Activated T-helper 1 cell treated with anti-CD3 and anti-CD28 coated beads, Interleukin-12 subunit alpha, Interleukin-12 subunit beta, Interleukin-2, Interleukin-4 antibody, amounts not matched to agents 30 ng/mL and 10 ng/mL and 1 ng/mL, durations not matched to agents 14 hours and 24 hours and 36 hours (primary cell): ENCODE measurements at regions of chr12 and their contacts with region 1.

Region 1: GRCh38 chr12:57751788-57752667 is at the start of gene CDK4:
- DNase-seq: peak; percentile 98
- H3K4me3 Mint-ChIP-seq: peak within 1 kb of the TSS; percentile 94
- H3K27ac Mint-ChIP-seq: peak within 1 kb of the TSS; percentile 95
- H3K4me1 Mint-ChIP-seq: peaks cover 67% of the 10 kb centered on the region
- H3K27me3 Mint-ChIP-seq: peaks cover 3% of the 10 kb centered on the region
- total RNA-seq, gene CDK4: 218 and 227 TPM in 2 replicates

Region 2: DNA sequence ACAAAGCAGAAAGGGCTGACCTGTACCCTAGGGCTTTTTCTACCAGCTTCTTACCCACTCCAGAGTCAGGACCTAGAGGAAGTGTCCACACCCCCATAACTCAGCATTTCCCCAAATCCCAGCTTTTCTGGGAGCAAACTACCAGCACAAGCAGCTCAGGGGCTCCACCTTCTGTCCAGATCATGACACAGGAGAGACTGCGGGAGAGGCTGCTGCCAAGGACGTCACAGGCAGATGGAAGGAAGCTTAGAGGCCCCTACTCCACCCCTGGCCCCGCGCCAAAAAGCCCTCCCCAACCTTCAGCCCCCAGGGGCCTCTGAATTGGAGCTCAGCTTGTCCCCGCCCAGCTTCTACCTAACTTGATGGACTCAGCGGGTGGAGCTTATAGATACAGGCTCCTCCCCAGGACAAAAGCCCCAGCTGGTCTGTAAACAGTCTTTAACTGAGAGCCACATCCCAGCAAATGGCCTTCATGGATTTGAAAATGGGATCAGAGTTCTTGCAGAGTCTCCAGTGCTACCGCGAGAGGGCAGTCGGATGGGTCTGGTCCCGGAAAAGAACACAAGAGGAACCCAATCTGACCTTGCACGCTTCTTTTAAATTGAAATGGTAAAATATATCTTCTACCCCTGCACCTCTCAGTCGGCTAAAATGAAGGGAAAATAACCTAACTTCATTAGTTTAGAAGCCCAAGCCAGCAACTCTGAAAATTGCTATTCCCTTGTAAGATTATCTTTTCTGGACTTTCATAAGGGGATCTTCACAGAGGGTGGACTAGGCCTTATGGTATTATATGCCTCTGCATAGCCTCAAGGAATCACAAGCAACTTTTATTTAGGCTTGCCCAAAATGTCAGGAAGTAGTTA is 1115.1 kb before region 1 on chr12:
- intact Hi-C with region 1: loop called (anchors 10 kb)
- DNase-seq: peak; percentile 79
- H3K4me3 Mint-ChIP-seq: peak overlapping the region; percentile 98
- H3K27ac Mint-ChIP-seq: peak overlapping the region; percentile 92
- H3K4me1 Mint-ChIP-seq: peaks cover 62% of the 10 kb centered on the region
- H3K27me3 Mint-ChIP-seq: no peaks in the 10 kb centered on the region

Region 3: DNA sequence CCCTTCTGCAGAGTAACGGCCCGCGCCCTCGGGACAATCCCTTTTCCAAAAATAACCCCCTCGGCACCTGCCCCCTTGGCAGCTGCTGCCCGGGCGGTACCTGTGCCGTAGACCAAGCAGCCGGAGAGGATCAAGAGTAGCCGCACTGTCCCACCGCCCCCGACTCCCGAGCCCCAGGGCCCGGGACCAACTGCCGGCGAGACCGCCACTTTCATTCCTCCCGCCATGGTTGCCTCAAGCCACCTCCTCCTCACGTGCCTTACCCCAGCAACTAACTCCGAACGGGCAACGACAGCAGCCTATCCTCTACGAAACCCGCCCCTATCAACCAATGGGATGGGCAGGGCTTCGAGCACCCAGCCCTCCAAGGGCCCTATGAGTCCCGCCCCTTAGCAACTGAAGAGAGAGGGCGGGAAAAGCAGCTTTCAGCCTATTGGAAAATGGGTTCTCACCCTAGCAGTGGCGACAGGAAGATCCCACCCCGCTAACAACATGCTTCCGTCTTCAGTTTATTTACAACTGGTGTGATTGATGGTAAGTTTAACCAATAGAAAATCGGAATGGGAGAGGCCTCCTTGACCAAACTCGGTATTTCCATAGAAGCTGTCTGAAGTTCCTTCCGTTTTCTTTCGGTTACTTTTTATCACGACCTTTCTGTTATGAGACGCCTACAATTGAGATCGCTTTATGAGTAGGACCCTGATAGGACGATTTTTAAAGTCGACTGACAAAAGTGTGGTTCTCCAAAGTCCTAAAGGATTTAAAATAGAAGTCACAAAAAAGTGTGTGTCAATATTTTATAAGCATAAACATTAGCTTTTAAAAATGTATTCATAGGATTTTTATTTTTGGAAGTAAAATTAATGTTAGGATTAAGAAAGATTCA is 673.3 kb before region 1 on chr12 and contains the start of gene NEMP1:
- intact Hi-C with region 1: loop called (anchors 1 kb)
- DNase-seq: peak; percentile 97
- H3K4me3 Mint-ChIP-seq: peak within 1 kb of the TSS; percentile 89
- H3K27ac Mint-ChIP-seq: peak within 1 kb of the TSS; percentile 92
- H3K4me1 Mint-ChIP-seq: peaks cover 16% of the 10 kb centered on the region
- H3K27me3 Mint-ChIP-seq: no peaks in the 10 kb centered on the region
- total RNA-seq, gene NEMP1: 70.2 and 71.7 TPM in 2 replicates

Region 4: DNA sequence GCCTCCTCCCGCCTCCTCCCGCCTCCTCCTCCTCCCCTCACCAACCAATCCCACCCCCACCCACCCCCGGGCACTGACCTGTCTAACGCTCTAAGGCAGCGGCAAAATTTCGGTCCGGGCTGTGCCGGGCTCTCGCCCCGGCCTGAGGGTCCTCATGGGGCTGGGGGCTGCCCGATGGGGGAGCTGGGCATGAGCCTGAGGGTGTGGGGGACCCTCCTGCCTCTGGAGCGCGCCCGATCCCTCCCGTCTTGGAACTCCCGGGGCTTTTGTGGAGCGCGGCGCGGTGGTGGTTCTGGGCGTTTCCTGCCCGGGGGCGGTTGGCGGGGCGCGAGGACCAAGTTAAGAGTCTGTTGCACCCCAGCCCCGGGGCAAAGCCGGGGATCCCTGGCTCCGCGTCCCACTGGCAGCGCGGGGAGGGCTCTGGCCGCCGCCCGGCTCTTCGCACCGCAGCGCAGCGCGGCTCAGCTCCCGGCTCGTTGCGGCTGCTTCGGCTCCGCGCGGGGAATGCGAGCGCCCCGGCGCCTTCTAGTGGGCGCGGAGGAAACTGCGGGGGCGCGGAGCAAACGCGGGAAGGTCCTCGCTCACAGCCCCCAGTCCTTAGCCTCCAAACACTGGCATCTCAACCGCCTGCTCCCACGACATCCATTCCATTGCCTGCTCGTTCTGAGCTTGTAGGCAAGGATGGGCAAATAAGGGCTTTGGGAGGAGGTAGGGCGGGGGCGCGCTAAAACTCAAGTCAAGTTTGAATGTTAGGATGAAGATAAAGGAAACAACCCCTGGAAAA is 119.1 kb before region 1 on chr12 and contains the start of gene B4GALNT1:
- intact Hi-C with region 1: no loop called
- DNase-seq: peak; percentile 63
- H3K4me3 Mint-ChIP-seq: peak within 1 kb of the TSS; percentile 79
- H3K27ac Mint-ChIP-seq: no peak within 1 kb of the TSS
- H3K4me1 Mint-ChIP-seq: peaks cover 6% of the 10 kb centered on the region
- H3K27me3 Mint-ChIP-seq: peaks cover 54% of the 10 kb centered on the region
- total RNA-seq, gene B4GALNT1: 4.4 and 4.6 TPM in 2 replicates

Region 5: GRCh38 chr12:57771708-57772428 is 19.8 kb after region 1 on chr12 and contains the start of gene METTL1:
- intact Hi-C with region 1: loop called (anchors 1 kb)
- DNase-seq: peak; percentile 90
- H3K4me3 Mint-ChIP-seq: peak within 1 kb of the TSS; percentile 93
- H3K27ac Mint-ChIP-seq: peak within 1 kb of the TSS; percentile 99
- H3K4me1 Mint-ChIP-seq: peaks cover 40% of the 10 kb centered on the region
- H3K27me3 Mint-ChIP-seq: no peaks in the 10 kb centered on the region
- total RNA-seq, gene METTL1: 89.7 and 90.0 TPM in 2 replicates

Region 6: GRCh38 chr12:57904848-57905811 is 153.1 kb after region 1 on chr12:
- intact Hi-C with region 1: loop called (anchors 1 kb)
- DNase-seq: peak; percentile 70
- H3K4me3 Mint-ChIP-seq: peak overlapping the region; percentile 32
- H3K27ac Mint-ChIP-seq: peak overlapping the region; percentile 0
- H3K4me1 Mint-ChIP-seq: peaks cover 16% of the 10 kb centered on the region
- H3K27me3 Mint-ChIP-seq: peaks cover 21% of the 10 kb centered on the region

Region 7: GRCh38 chr12:57941165-57941894 is 189.3 kb after region 1 on chr12 and contains the start of gene ATP23:
- intact Hi-C with region 1: no loop called
- DNase-seq: peak; percentile 86
- H3K4me3 Mint-ChIP-seq: peak within 1 kb of the TSS; percentile 89
- H3K27ac Mint-ChIP-seq: peak within 1 kb of the TSS; percentile 95
- H3K4me1 Mint-ChIP-seq: peaks cover 46% of the 10 kb centered on the region
- H3K27me3 Mint-ChIP-seq: no peaks in the 10 kb centered on the region
- total RNA-seq, gene ATP23: 7.3 and 8.7 TPM in 2 replicates

Region 8: GRCh38 chr12:58262796-58263195 is 510.8 kb after region 1 on chr12:
- intact Hi-C with region 1: no loop called
- DNase-seq: no peak
- H3K4me3 Mint-ChIP-seq: no peak overlapping the region
- H3K27ac Mint-ChIP-seq: no peak overlapping the region
- H3K4me1 Mint-ChIP-seq: no peaks in the 10 kb centered on the region
- H3K27me3 Mint-ChIP-seq: peaks cover 1% of the 10 kb centered on the region

Region 9: DNA sequence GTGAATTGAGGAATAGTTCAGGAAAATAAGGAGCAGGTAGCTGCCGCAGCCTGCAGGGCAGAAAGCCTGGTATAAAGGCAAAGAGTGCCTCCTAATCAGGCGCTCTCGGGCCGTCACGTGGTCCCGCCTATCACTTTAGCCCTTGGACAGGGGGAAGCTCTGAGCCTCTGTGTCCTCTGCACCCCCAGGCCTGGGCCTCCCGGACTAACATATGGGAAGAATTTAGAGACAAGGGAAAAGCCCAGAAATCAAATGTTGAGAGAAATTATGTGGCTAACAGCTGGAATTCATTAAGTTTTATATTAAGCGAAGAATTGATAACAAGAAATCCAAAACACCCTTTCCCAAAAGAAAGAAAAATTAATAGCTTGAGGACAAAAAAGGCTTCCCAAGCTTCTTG is 607.1 kb after region 1 on chr12:
- intact Hi-C with region 1: no loop called
- DNase-seq: no peak
- H3K4me3 Mint-ChIP-seq: no peak overlapping the region
- H3K27ac Mint-ChIP-seq: no peak overlapping the region
- H3K4me1 Mint-ChIP-seq: no peaks in the 10 kb centered on the region
- H3K27me3 Mint-ChIP-seq: peaks cover 6% of the 10 kb centered on the region